Common myeloid progenitor, CD34-positive (primary cell): ENCODE measurements at regions of chr5 and their contacts with region 1.

Region 1: DNA sequence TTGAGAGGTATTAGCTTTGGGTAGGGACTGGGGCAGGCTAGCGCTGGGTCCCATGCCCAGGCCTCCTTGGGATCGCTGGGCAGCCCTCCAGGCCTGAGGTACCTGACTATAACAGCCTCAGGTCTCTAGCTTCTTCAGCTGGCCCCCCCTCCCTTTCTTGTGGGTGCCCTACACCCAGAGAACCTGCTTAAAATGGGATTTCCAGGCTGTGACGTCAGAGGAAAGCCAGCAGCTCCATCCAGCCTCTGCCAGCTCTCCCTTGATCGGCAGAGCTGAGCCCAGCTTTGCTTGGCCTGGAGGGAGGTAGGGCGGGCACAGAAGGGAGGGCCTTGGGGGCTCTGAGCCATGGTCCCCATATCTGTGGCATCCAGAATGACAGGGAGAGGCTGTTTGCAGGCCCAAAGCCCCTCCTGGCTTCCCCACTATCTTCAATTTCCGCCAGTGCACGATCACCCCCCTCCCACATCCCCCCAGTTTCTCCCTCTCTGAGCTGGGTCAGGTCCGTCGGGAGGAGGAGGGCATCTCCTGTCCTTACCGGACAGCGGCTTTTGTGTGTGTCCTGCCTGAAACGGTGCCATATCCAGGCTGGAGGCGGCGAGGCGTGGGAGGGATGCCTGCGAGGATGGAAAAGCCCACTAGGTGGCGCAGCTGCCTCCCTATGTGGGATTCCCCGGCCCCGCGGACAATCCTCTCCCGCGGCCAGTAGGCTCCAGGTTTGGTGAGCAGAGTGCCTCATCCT is 10.8 kb downstream of the REEP2 start:
- DNase-seq: peak; percentile 65 to 82 (median 79)
- H3K4me3 ChIP-seq: peak overlapping the region in 1 of 7 experiments; percentile 57
- H3K27ac ChIP-seq: no peak overlapping the region
- H3K4me1 ChIP-seq: peaks cover 0 to 7% (median 3%) of the 10 kb centered on the region in 4 experiments
- H3K27me3 ChIP-seq: no peaks in the 10 kb centered on the region

Region 2: GRCh38 chr5:138438724-138439476 is 10.8 kb before region 1 on chr5 and contains the start of gene REEP2:
- CTCF ChIA-PET with region 1: interaction called, 35 read pairs
- POLR2A ChIA-PET with region 1: interaction called, 3 read pairs
- DNase-seq: peak; percentile 77 to 91 (median 89)
- H3K4me3 ChIP-seq: peak within 1 kb of the TSS; percentile 27 to 80 (median 54)
- H3K27ac ChIP-seq: no peak within 1 kb of the TSS
- H3K4me1 ChIP-seq: peaks cover 0 to 15% (median 14%) of the 10 kb centered on the region in 4 experiments
- H3K27me3 ChIP-seq: no peaks in the 10 kb centered on the region

Region 3: DNA sequence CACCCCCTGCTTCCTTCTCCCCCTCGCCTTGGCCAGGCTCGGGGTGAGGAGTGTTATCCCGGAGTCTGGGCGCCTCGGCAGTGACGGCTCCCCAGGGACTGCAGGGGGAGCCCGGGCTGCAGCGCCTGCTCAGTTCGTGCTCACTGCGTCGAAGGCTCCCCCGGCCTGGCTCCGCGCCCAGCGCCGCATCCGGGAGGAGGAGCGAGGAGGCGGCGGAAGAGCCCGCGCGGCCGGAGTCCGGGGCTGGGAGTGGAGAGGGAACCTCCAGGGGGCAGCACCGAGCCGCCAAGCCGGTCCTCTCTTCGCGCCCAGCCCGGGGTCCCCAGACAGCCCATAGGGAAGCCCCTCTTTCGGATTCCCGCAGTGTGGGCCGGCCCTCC is 14.3 kb after region 1 on chr5:
- CTCF ChIA-PET with region 1: interaction called, 143 read pairs
- POLR2A ChIA-PET with region 1: interaction called, 6 read pairs
- DNase-seq: peak; percentile 95 to 97 (median 95)
- H3K4me3 ChIP-seq: peak overlapping the region; percentile 73 to 89 (median 80)
- H3K27ac ChIP-seq: peak overlapping the region; percentile 66 to 88
- H3K4me1 ChIP-seq: peaks cover 2 to 43% (median 36%) of the 10 kb centered on the region in 4 experiments
- H3K27me3 ChIP-seq: peaks cover 0 to 24% (median 8%) of the 10 kb centered on the region in 5 experiments

Region 4: GRCh38 chr5:138508963-138509362 is 59.3 kb after region 1 on chr5:
- CTCF ChIA-PET with region 1: interaction called, 494 read pairs
- POLR2A ChIA-PET with region 1: interaction called, 5 read pairs
- DNase-seq: no peak
- H3K4me3 ChIP-seq: no peak overlapping the region
- H3K27ac ChIP-seq: no peak overlapping the region
- H3K4me1 ChIP-seq: no peaks in the 10 kb centered on the region
- H3K27me3 ChIP-seq: no peaks in the 10 kb centered on the region

Region 5: GRCh38 chr5:138515556-138516245 is 66.0 kb after region 1 on chr5:
- CTCF ChIA-PET with region 1: interaction called, 16 read pairs
- POLR2A ChIA-PET with region 1: no interaction called
- DNase-seq: no peak
- H3K4me3 ChIP-seq: no peak overlapping the region
- H3K27ac ChIP-seq: no peak overlapping the region
- H3K4me1 ChIP-seq: no peaks in the 10 kb centered on the region
- H3K27me3 ChIP-seq: no peaks in the 10 kb centered on the region